Activated CD8-positive, alpha-beta T cell treated with anti-CD3 and anti-CD28 coated beads for 36 hours (primary cell): ENCODE measurements at regions of chr14 and their contacts with region 1.

Region 1: DNA sequence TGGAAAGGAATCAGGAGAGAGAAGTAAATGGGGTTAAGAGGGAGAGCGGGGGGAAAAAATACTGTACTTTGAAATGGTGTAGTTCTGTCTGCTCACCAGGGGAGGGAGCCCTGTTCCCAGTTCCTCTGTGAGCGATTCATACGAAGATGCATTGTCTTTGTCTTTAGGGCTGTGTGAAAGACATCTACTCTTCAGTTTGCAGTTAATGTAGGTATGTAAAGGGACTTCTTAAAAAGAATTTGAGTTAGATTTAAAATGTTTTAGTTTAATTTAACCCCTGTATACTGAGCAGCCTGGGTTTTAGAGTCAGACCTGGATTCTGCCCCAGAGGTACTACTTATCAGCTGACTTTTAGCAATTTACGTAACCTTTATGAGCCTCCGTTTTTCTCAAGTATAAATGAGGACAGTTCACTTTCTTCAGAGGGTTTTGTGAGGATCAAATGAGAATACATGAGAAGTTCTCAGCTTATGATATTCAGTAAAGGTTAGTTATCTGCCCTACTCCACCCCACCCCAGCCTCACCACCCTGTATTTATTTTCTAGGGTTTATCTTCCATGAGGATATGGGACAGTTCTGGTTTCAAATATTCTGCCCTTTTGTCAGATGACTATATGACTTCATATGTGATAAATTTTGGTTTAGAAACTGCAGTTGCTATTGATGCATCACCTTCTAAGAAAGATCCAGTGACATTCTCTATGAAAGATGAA is 82.5 kb upstream of the EVL start:
- DNase-seq: peak; percentile 68
- ATAC-seq: peak; percentile 100
- H3K4me3 Mint-ChIP-seq: no peak overlapping the region
- H3K27ac Mint-ChIP-seq: no peak overlapping the region
- H3K4me1 Mint-ChIP-seq: peaks cover 16% of the 10 kb centered on the region
- H3K27me3 Mint-ChIP-seq: no peaks in the 10 kb centered on the region
- CTCF ChIP-seq: peak; percentile 96

Region 2: GRCh38 chr14:99955826-99956455 is 26.8 kb before region 1 on chr14:
- CTCF ChIA-PET with region 1: no interaction called
- POLR2A ChIA-PET with region 1: no interaction called
- intact Hi-C with region 1: no loop called
- DNase-seq: no peak
- ATAC-seq: peak; percentile 42
- H3K4me3 Mint-ChIP-seq: no peak overlapping the region
- H3K27ac Mint-ChIP-seq: no peak overlapping the region
- H3K4me1 Mint-ChIP-seq: no peaks in the 10 kb centered on the region
- H3K27me3 Mint-ChIP-seq: peaks cover 10% of the 10 kb centered on the region
- CTCF ChIP-seq: no peak

Region 3: DNA sequence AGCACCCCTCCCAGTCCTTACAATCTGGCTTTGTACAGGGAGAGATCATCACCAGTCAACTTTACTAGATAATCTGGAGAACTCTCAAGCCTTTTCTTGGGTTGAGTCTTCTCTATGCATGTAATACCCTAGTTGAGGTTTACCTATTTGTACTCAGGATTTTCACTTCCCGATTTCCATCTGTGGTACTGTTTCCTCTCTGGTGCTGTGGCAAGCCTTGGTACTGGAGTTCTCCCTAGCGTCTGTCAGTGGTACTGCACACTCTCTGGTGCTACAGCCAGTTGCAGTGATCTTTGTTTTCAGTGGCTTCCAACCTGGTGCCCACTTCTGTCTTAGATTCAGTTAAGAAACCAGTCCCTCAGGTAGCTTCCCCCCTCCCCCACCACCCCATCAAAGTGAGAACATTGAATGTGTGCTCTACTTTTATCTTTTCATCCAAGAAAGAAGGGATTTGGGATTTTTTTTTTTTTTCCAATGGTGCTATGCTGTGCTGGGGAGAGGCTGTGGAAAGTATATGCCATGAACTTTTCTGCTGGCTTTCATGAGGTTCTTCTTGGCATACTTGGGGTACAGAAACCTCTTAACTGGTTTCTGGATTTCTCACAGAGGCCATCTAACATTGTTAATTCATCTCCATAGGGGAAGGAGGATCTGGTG is 13.1 kb after region 1 on chr14:
- CTCF ChIA-PET with region 1: interaction called, 12 read pairs
- POLR2A ChIA-PET with region 1: no interaction called
- intact Hi-C with region 1: no loop called
- DNase-seq: peak; percentile 84
- ATAC-seq: peak; percentile 100
- H3K4me3 Mint-ChIP-seq: no peak overlapping the region
- H3K27ac Mint-ChIP-seq: no peak overlapping the region
- H3K4me1 Mint-ChIP-seq: peaks cover 11% of the 10 kb centered on the region
- H3K27me3 Mint-ChIP-seq: peaks cover 8% of the 10 kb centered on the region
- CTCF ChIP-seq: peak; percentile 95

Region 4: DNA sequence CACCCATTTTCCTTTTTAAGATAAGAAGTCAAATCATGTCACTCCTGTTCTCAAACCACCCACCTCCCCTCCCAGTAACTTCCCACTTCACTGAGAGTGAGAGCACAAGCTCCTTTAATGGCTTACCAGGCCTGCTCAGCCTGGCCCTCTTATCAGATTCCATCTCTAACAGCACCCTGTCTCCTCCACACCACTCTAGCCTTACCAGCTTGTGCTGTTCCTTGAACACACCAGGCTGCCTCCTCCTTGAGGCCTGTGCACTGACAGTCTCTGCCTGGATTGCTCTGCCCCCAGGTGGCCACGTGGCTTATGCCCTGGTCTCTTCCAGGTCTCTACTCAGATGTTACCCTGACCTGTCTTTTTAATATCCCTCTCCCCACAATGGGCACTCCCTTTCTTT is 42.4 kb after region 1 on chr14:
- CTCF ChIA-PET with region 1: interaction called, 21 read pairs
- POLR2A ChIA-PET with region 1: no interaction called
- intact Hi-C with region 1: no loop called
- DNase-seq: peak; percentile 52
- ATAC-seq: peak; percentile 86
- H3K4me3 Mint-ChIP-seq: no peak overlapping the region
- H3K27ac Mint-ChIP-seq: peak overlapping the region; percentile 27
- H3K4me1 Mint-ChIP-seq: peaks cover 10% of the 10 kb centered on the region
- H3K27me3 Mint-ChIP-seq: no peaks in the 10 kb centered on the region
- CTCF ChIP-seq: peak; percentile 54

Region 5: GRCh38 chr14:100155042-100155846 is 172.6 kb after region 1 on chr14:
- CTCF ChIA-PET with region 1: interaction called, 15 read pairs
- POLR2A ChIA-PET with region 1: interaction called, 3 read pairs
- intact Hi-C with region 1: no loop called
- DNase-seq: peak; percentile 62
- ATAC-seq: peak; percentile 26
- H3K4me3 Mint-ChIP-seq: no peak overlapping the region
- H3K27ac Mint-ChIP-seq: no peak overlapping the region
- H3K4me1 Mint-ChIP-seq: peaks cover 3% of the 10 kb centered on the region
- H3K27me3 Mint-ChIP-seq: peaks cover 16% of the 10 kb centered on the region
- CTCF ChIP-seq: peak; percentile 93

Region 6: DNA sequence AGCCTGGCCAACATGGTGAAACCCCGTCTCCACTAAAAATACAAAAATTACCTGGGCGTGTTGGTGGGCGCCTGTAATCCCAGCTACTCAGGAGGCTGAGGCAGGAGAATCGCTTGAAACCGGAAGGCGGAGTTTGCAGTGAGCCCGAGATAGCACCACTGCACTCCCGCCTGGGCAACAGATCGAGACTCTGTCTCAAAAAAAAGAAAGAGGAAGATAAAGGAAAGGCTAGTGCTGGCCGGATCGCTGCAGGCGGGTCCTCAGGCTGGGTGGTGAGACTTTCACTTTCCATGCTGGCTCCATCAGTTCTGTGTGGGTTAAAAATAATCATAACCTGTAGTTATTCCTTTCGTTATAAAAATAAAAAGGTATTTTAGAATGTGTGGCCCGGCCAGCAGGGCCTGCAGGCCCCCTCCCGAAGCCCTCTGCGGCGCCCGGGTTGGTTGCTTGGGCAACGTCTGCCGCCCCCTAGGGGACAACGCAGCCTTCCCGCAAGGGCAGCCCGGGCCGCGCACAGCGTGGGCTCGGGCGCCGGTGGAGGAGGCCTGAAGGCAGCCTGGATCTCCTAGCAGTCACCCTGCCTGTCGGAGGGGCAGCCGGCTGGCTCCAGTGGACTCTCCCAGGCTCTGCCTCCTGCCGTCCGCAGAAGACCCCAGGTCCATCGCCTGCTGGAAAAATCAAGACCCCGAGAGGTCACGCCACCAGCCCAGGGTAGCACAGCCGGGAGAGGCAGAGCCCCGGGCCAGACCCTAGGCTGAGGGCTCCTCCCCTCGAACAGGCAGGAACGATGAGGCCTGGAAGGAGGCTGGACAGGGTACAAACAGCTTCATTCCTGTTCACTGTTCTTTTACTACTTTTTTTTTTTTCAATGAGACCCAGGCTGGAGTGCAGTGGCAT is 335.5 kb after region 1 on chr14:
- CTCF ChIA-PET with region 1: no interaction called
- POLR2A ChIA-PET with region 1: no interaction called
- intact Hi-C with region 1: no loop called
- DNase-seq: peak; percentile 84
- ATAC-seq: peak; percentile 96
- H3K4me3 Mint-ChIP-seq: peak overlapping the region; percentile 52
- H3K27ac Mint-ChIP-seq: no peak overlapping the region
- H3K4me1 Mint-ChIP-seq: peaks cover 6% of the 10 kb centered on the region
- H3K27me3 Mint-ChIP-seq: no peaks in the 10 kb centered on the region
- CTCF ChIP-seq: peak; percentile 95